ENCODE measurements at regions of chr1 and their contacts with region 1.

Region 1: DNA sequence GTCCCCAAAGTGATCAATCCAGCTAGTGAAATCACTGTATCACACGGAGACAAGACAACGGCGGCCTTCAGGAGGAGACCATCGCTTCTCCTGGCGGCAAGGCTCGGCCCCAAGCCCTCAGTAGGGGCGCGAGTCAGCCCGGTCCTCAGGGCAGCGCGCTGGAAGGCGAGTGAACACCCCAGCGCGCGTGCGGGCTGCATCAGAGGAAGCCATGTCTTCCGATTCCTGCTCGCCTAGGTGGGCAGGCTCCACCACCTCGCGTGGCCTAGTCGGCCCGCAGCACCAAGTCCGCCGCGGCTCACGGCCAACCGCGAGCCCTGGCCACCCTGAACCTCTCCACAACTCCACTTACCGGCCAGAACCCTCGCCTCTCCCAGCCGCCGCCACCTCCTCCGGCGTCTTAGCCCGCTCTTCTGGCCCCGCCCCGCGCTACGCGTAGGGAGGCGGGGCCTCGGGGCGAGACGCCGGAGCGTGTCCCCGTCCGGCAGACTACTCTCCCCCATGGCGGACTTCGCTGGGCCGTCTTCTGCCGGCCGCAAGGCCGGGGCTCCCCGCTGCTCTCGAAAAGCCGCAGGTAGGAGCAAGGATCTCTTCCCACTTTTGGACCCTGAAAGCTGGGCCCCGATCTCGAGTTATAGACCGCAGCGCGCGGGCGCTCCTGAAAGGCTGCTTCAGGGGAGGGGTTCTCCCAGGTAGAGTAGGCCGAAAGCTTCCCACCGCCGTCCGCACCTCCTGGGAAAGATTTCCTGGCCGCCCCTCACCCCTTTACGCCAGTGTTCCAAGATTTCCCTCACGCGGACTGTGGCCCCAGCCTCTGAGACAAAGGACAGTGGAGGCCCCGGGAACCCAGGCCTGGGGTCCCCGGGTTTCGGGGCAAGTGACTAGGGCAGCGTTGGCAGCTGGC is at the starts of genes GLMN and RPAP2:
- DNase-seq: peak; percentile 72
- ATAC-seq: peak; percentile 99
- H3K4me3 ChIP-seq: peak within 1 kb of the TSS; percentile 89 to 92
- H3K27ac ChIP-seq: peak within 1 kb of the TSS; percentile 86
- H3K4me1 ChIP-seq: peaks cover 0 to 9% of the 10 kb centered on the region in 2 experiments; a peak in 2 of 4 replicates
- H3K27me3 ChIP-seq: no peaks in the 10 kb centered on the region
- CTCF ChIP-seq: no peak; a peak in 1 of 6 replicates
- POLR2A ChIP-seq: peak; percentile 85
- RAD21 ChIP-seq: no peak
- total RNA-seq, gene GLMN: 10.9 TPM
- total RNA-seq, gene RPAP2: 28.1 TPM

Region 2: DNA sequence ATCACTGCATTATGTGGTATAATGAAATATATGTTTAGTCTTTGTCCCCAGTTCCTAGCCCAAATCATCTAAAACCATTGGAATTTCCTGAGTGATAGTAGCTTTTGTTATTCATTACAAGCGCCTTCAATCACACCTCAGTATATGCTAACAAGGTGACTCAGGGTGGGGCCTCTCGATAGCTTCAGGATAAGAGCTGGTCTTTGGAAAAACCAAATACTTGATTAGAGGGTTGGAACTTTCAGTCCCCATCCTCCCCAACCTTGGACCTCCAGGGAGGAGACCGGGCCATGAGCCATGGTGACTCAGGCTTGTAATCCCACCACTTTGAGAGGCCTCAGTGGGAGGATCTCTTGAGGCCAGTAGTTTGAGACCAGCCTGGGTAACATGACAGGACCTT is 354.7 kb before region 1 on chr1:
- CTCF ChIA-PET with region 1: no interaction called
- POLR2A ChIA-PET with region 1: no interaction called
- RAD21 ChIA-PET with region 1: no interaction called
- intact Hi-C with region 1: loop called (anchors 5 kb)
- DNase-seq: no peak
- ATAC-seq: no peak
- H3K4me3 ChIP-seq: no peak overlapping the region
- H3K27ac ChIP-seq: no peak overlapping the region
- H3K4me1 ChIP-seq: peaks cover 0 to 14% of the 10 kb centered on the region in 2 experiments; a peak in 2 of 4 replicates
- H3K27me3 ChIP-seq: no peaks in the 10 kb centered on the region
- CTCF ChIP-seq: no peak
- POLR2A ChIP-seq: no peak
- RAD21 ChIP-seq: no peak